PC-9 (cell line): ENCODE measurements at regions of chr10 and their contacts with region 1.

Region 1: DNA sequence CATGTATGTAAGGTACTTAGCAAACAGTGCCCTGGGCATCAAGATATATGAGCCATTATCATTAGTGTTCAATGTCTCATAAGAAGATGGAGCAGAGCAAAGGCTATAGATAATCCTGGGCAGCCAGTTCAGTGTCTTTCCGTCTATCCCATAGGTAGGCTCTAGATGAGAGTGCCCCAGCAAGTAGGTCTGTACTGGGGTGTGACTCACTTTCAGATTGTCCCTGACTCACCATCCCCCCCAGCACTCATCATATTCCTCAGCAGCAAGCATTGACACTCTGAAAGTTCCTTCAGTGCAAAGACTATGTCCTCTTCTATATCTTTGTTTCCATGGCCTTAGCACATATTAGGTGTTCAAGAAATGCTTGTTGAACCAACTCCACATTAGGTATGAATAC is 20.0 kb upstream of the FAM204A start:
- DNase-seq: no peak
- H3K4me3 ChIP-seq: no peak overlapping the region
- H3K27ac ChIP-seq: no peak overlapping the region
- H3K4me1 ChIP-seq: no peaks in the 10 kb centered on the region
- H3K27me3 ChIP-seq: no peaks in the 10 kb centered on the region
- CTCF ChIP-seq: no peak

Region 2: DNA sequence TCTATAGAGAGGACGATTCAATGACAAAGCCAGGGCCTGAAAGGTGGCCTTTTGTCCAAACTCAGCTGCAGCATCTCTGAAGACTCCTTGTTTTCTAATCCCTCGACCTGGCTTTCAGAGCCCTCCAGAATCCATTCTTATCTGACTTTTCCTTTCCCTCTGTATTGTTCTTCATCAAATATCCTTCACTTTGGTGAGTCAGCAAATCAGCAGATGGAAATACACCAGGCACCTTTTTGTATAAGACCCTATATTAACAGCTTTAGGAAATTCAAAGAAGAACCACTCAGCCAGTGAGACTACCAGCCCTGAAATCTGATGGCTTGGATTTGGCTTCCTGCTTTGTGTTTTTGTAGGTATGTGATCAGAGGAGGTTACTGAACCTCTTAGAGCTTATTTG is 233.4 kb before region 1 on chr10:
- CTCF ChIA-PET with region 1: no interaction called
- POLR2A ChIA-PET with region 1: no interaction called
- intact Hi-C with region 1: no loop called
- DNase-seq: no peak
- H3K4me3 ChIP-seq: no peak overlapping the region
- H3K27ac ChIP-seq: no peak overlapping the region
- H3K4me1 ChIP-seq: no peaks in the 10 kb centered on the region
- H3K27me3 ChIP-seq: no peaks in the 10 kb centered on the region
- CTCF ChIP-seq: no peak

Region 3: GRCh38 chr10:118173296-118173695 is 188.8 kb before region 1 on chr10:
- CTCF ChIA-PET with region 1: no interaction called
- POLR2A ChIA-PET with region 1: no interaction called
- intact Hi-C with region 1: loop called (anchors 5 kb)
- DNase-seq: no peak
- H3K4me3 ChIP-seq: no peak overlapping the region
- H3K27ac ChIP-seq: no peak overlapping the region
- H3K4me1 ChIP-seq: no peaks in the 10 kb centered on the region
- H3K27me3 ChIP-seq: no peaks in the 10 kb centered on the region
- CTCF ChIP-seq: no peak

Region 4: GRCh38 chr10:118332236-118332635 is 29.9 kb before region 1 on chr10:
- CTCF ChIA-PET with region 1: interaction called, 10 read pairs
- POLR2A ChIA-PET with region 1: no interaction called
- intact Hi-C with region 1: no loop called
- DNase-seq: no peak
- H3K4me3 ChIP-seq: no peak overlapping the region
- H3K27ac ChIP-seq: no peak overlapping the region
- H3K4me1 ChIP-seq: no peaks in the 10 kb centered on the region
- H3K27me3 ChIP-seq: no peaks in the 10 kb centered on the region
- CTCF ChIP-seq: no peak

Region 5: GRCh38 chr10:118342638-118343020 is 19.5 kb before region 1 on chr10:
- CTCF ChIA-PET with region 1: no interaction called
- POLR2A ChIA-PET with region 1: no interaction called
- intact Hi-C with region 1: no loop called
- DNase-seq: no peak
- H3K4me3 ChIP-seq: peak overlapping the region; percentile 89; the same call in 1 of the 2 replicates
- H3K27ac ChIP-seq: no peak overlapping the region
- H3K4me1 ChIP-seq: peaks cover 9% of the 10 kb centered on the region; the same call in 1 of the 2 replicates
- H3K27me3 ChIP-seq: no peaks in the 10 kb centered on the region
- CTCF ChIP-seq: no peak

Region 6: DNA sequence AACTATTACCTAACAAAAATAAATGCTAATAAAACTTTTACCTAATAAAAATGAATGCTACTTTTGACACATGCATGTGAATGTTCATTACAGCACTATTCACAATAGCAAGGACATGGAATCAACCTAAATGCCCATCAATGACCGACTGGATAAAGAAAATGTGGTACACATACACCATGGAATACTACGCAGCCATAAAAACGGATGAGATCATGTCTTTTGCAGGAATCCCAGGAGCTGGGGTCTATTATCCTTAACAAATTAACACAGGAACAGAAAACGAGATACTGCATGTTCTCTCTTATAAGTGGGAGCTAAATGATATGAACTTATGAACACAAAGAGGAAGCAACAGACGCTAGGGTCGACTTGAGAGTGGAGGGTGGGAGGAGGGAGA is 68.1 kb after region 1 on chr10:
- CTCF ChIA-PET with region 1: no interaction called
- POLR2A ChIA-PET with region 1: no interaction called
- intact Hi-C with region 1: no loop called
- DNase-seq: no peak
- H3K4me3 ChIP-seq: no peak overlapping the region
- H3K27ac ChIP-seq: no peak overlapping the region
- H3K4me1 ChIP-seq: no peaks in the 10 kb centered on the region
- H3K27me3 ChIP-seq: no peaks in the 10 kb centered on the region
- CTCF ChIP-seq: no peak